ENCODE measurements at regions of chr1 and their contacts with region 1.

Region 1: DNA sequence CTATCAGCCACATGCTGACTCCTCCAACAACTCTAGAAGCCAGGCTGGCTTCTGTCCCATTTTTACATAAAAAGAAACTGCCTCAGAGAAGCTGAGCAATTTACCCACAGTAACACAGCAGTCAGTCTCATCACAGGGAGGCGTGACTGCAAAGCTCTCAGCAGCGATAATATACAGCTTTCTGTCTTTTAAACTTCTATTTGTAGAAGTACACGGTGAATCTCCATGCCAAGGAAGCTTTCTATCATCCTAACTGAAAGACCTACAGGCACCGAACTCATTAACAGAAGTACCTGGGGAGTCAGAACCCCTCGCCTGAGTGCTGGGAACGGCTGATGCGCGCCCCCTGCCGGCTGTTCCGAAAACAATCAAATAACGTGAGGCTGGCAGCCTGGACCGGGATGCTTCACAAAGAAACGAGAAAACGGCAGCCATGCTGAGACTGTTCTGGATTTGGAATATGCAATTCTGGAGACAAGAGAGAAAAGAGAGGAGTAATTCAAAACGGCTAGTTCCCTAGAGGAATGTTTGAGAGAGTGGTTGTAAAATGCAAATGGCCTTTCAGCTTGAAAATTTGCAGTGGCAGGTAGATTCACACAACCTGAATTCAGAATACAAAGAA is 43.5 kb upstream of the RAB4A start:
- DNase-seq: peak; percentile 85
- H3K4me3 Mint-ChIP-seq: no peak overlapping the region
- H3K27ac Mint-ChIP-seq: no peak overlapping the region
- H3K4me1 Mint-ChIP-seq: peaks cover 4% of the 10 kb centered on the region
- H3K27me3 Mint-ChIP-seq: no peaks in the 10 kb centered on the region

Region 2: GRCh38 chr1:228664399-228664914 is 563.0 kb before region 1 on chr1:
- CTCF ChIA-PET with region 1: interaction called, 110 read pairs
- POLR2A ChIA-PET with region 1: no interaction called
- intact Hi-C with region 1: loop called (anchors 1 kb)
- DNase-seq: peak; percentile 83
- H3K4me3 Mint-ChIP-seq: no peak overlapping the region
- H3K27ac Mint-ChIP-seq: no peak overlapping the region
- H3K4me1 Mint-ChIP-seq: no peaks in the 10 kb centered on the region
- H3K27me3 Mint-ChIP-seq: no peaks in the 10 kb centered on the region

Region 3: GRCh38 chr1:228691926-228692325 is 535.5 kb before region 1 on chr1:
- CTCF ChIA-PET with region 1: interaction called, 15 read pairs
- POLR2A ChIA-PET with region 1: no interaction called
- intact Hi-C with region 1: loop called (anchors 10 kb)
- DNase-seq: no peak
- H3K4me3 Mint-ChIP-seq: no peak overlapping the region
- H3K27ac Mint-ChIP-seq: no peak overlapping the region
- H3K4me1 Mint-ChIP-seq: peaks cover 10% of the 10 kb centered on the region
- H3K27me3 Mint-ChIP-seq: peaks cover 5% of the 10 kb centered on the region

Region 4: DNA sequence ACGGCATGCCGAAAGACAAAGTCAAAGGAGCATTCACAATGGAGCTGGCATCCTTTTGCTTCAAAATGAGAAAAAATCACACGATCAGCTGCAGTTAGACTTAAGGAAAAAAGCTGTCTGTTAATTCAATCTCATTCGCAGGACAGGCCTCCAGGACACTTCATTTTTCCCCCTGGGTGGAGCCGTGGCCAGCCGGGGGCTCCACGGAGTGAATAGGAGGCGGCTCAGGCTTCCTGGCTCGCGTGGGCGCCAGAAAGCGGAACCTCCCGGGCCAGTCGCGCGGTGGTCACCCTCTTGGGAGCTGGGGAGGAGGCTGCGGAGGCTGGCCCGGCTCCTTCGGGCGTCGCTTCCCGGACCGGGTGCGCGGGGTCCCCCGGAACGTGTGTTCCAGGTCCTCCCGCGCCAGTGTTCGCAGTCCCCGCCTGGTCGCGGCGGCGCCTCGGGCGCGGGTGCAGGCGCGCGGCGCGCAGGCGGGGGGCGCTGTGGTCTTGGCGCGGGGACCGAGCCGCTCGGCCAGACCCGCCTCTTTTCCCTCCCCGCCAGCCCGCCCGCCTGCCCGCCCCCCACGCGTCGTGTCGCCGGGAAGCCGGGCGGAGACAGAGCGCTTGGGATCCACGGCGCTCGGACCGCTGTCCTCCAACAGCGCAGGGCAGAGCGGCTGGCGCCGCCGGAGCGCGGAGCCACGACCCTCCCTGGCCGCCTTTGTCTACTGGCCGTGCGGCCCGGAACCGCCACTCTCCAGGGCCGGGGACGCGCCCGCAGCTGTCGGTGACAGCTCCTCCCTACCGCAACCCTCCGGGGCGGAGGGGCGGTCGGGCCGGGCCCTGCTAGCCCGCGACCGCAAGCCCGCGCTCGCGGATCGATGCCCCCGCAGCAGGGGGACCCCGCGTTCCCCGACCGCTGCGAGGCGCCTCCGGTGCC is 492.3 kb before region 1 on chr1 and contains the start of gene RHOU:
- CTCF ChIA-PET with region 1: interaction called, 67 read pairs
- POLR2A ChIA-PET with region 1: interaction called, 4 read pairs
- intact Hi-C with region 1: loop called (anchors 1 kb)
- DNase-seq: peak; percentile 74
- H3K4me3 Mint-ChIP-seq: peak within 1 kb of the TSS; percentile 77
- H3K27ac Mint-ChIP-seq: no peak within 1 kb of the TSS
- H3K4me1 Mint-ChIP-seq: peaks cover 20% of the 10 kb centered on the region
- H3K27me3 Mint-ChIP-seq: peaks cover 9% of the 10 kb centered on the region
- total RNA-seq, gene RHOU: 0.57 to 0.68 TPM

Region 5: GRCh38 chr1:229068270-229068987 is 159.0 kb before region 1 on chr1:
- CTCF ChIA-PET with region 1: interaction called, 12 read pairs
- POLR2A ChIA-PET with region 1: no interaction called
- intact Hi-C with region 1: no loop called
- DNase-seq: no peak
- H3K4me3 Mint-ChIP-seq: no peak overlapping the region
- H3K27ac Mint-ChIP-seq: no peak overlapping the region
- H3K4me1 Mint-ChIP-seq: peaks cover 20% of the 10 kb centered on the region
- H3K27me3 Mint-ChIP-seq: no peaks in the 10 kb centered on the region

Region 6: GRCh38 chr1:229127301-229127700 is 100.1 kb before region 1 on chr1:
- CTCF ChIA-PET with region 1: interaction called, 8 read pairs
- POLR2A ChIA-PET with region 1: no interaction called
- intact Hi-C with region 1: loop called (anchors 5 kb)
- DNase-seq: peak; percentile 63
- H3K4me3 Mint-ChIP-seq: no peak overlapping the region
- H3K27ac Mint-ChIP-seq: no peak overlapping the region
- H3K4me1 Mint-ChIP-seq: peaks cover 46% of the 10 kb centered on the region
- H3K27me3 Mint-ChIP-seq: no peaks in the 10 kb centered on the region

Region 7: DNA sequence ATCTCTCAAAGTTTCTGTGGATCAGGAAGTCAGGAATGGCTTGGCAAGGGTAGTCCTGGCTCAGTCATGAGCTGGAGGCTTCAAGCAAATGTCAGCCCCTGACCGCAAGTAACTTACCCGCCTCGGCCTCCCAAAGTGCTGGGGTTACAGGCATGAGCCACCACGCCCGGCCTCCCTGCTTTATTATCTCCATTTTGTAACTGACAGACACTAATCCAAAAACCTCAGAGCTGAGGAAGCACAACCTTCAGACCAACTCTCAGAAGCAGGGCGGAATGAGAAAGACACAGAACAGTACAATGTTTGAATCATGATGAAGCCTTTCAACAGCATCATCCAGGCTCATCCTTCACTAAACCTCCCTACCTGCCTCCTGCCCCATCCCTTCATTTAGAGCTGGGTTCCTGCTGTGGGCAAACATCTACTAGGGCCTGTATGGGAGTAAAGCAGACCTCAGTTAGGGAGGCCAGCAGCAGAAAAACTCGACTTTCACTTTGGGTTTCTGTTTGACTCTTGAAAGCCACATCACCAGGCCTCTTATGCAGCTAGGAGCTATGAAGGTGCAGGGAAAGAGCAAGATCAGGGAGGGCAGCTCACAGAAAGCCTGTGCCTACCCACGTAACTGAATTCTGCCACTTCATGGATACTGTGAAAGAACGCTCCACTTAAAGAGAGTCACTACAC is 40.9 kb before region 1 on chr1:
- CTCF ChIA-PET with region 1: interaction called, 12 read pairs
- POLR2A ChIA-PET with region 1: no interaction called
- intact Hi-C with region 1: no loop called
- DNase-seq: peak; percentile 49
- H3K4me3 Mint-ChIP-seq: no peak overlapping the region
- H3K27ac Mint-ChIP-seq: no peak overlapping the region
- H3K4me1 Mint-ChIP-seq: peaks cover 15% of the 10 kb centered on the region
- H3K27me3 Mint-ChIP-seq: no peaks in the 10 kb centered on the region

Region 8: DNA sequence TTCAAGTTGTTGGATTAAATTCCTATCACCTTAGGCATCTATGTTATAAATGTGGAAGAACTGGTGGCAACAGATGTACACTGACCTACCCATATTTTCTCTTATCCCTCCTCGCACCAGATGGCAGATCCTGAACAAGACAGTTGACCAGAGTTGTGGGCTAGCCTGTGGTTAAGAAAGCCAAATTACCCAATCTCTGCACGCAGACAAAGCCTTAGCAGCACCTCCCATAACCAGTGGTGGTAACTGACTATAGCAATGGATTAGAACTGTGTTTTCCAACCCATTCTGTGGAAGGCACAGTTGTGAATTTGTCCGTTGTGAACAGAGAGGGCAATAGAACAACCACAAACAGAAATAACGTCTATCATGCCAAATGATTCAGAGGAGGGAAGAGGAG is 310.5 kb after region 1 on chr1:
- CTCF ChIA-PET with region 1: no interaction called
- POLR2A ChIA-PET with region 1: no interaction called
- intact Hi-C with region 1: no loop called
- DNase-seq: no peak
- H3K4me3 Mint-ChIP-seq: no peak overlapping the region
- H3K27ac Mint-ChIP-seq: no peak overlapping the region
- H3K4me1 Mint-ChIP-seq: peaks cover 15% of the 10 kb centered on the region
- H3K27me3 Mint-ChIP-seq: no peaks in the 10 kb centered on the region